WTC11 (cell line): ENCODE measurements at regions of chr9 and their contacts with region 1.

Region 1: GRCh38 chr9:34072868-34073590 is 24.3 kb upstream of the UBAP2 start:
- DNase-seq: no peak
- ATAC-seq: peak; percentile 16
- H3K4me3 Mint-ChIP-seq: no peak overlapping the region
- H3K27ac Mint-ChIP-seq: peak overlapping the region; percentile 80
- H3K4me1 Mint-ChIP-seq: peaks cover 25% of the 10 kb centered on the region
- H3K27me3 Mint-ChIP-seq: no peaks in the 10 kb centered on the region
- CTCF ChIP-seq: no peak

Region 2: GRCh38 chr9:33924978-33925797 is 147.8 kb before region 1 on chr9:
- CTCF ChIA-PET with region 1: interaction called, 29 read pairs
- POLR2A ChIA-PET with region 1: no interaction called
- DNase-seq: peak; percentile 69
- ATAC-seq: peak; percentile 61
- H3K4me3 Mint-ChIP-seq: no peak overlapping the region
- H3K27ac Mint-ChIP-seq: peak overlapping the region; percentile 90
- H3K4me1 Mint-ChIP-seq: peaks cover 8% of the 10 kb centered on the region
- H3K27me3 Mint-ChIP-seq: no peaks in the 10 kb centered on the region
- CTCF ChIP-seq: peak; percentile 36; the same call in 1 of the 2 replicates

Region 3: DNA sequence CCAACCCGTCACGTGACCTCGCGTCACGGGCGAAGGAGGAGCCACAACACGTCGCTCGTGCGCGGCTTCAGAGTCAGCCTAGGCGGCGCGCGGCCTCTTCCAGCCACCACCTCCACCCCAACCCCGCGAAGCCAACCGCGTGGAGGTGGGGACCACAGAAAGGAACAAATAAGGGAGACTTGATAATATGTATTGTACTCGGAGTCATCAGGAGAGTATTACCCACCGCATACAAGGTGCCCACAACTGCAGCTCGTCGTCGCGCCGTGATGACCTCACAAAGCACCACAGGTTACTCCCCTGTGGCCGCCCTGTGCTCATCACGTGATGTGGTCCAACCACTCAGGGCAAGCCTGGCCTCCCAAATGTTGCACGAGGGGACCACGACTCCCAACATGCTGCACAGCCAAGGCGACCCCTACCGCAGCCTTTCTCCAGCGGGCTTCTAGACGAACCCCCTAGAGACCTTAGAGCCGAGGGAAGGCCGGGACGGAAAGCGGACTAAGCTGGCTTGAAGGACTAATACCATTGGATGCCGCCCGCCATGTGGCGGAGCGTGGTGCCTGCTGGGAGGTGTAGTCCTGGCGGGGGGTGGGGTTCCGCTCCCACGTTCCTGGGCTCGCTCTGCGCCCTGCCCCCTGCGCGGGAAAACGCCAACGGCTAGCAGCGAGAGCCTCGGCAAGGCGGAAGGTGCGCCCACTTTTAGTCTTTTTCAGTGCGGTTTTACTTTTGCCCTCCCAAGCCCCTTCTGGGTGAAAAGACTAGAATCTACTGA is 23.9 kb before region 1 on chr9:
- CTCF ChIA-PET with region 1: interaction called, 4 read pairs
- POLR2A ChIA-PET with region 1: interaction called, 15 read pairs
- DNase-seq: peak; percentile 97
- ATAC-seq: peak; percentile 82
- H3K4me3 Mint-ChIP-seq: peak overlapping the region; percentile 99
- H3K27ac Mint-ChIP-seq: peak overlapping the region; percentile 100
- H3K4me1 Mint-ChIP-seq: peaks cover 34% of the 10 kb centered on the region
- H3K27me3 Mint-ChIP-seq: no peaks in the 10 kb centered on the region; the same call in 1 of the 2 replicates
- CTCF ChIP-seq: no peak